Natural killer cell (primary cell): ENCODE measurements at regions of chrX and their contacts with region 1.

Region 1: GRCh38 chrX:149504915-149505651 is at the start of gene IDS:
- DNase-seq: peak; percentile 82 to 93
- ATAC-seq: peak; percentile 71 to 89 (median 80)
- H3K4me3 ChIP-seq: peak within 1 kb of the TSS; percentile 79
- H3K4me3 Mint-ChIP-seq: peak within 1 kb of the TSS; percentile 85
- H3K27ac ChIP-seq: peak within 1 kb of the TSS; percentile 98
- H3K27ac Mint-ChIP-seq: peak within 1 kb of the TSS; percentile 92 to 99
- H3K4me1 ChIP-seq: peaks cover 45% of the 10 kb centered on the region
- H3K4me1 Mint-ChIP-seq: peaks cover 37 to 44% of the 10 kb centered on the region in 2 donors
- H3K27me3 ChIP-seq: no peaks in the 10 kb centered on the region
- H3K27me3 Mint-ChIP-seq: peaks cover 0 to 10% of the 10 kb centered on the region in 2 donors
- CTCF ChIP-seq: no peak
- total RNA-seq, gene IDS: 286 to 344 (median 317) TPM

Region 2: DNA sequence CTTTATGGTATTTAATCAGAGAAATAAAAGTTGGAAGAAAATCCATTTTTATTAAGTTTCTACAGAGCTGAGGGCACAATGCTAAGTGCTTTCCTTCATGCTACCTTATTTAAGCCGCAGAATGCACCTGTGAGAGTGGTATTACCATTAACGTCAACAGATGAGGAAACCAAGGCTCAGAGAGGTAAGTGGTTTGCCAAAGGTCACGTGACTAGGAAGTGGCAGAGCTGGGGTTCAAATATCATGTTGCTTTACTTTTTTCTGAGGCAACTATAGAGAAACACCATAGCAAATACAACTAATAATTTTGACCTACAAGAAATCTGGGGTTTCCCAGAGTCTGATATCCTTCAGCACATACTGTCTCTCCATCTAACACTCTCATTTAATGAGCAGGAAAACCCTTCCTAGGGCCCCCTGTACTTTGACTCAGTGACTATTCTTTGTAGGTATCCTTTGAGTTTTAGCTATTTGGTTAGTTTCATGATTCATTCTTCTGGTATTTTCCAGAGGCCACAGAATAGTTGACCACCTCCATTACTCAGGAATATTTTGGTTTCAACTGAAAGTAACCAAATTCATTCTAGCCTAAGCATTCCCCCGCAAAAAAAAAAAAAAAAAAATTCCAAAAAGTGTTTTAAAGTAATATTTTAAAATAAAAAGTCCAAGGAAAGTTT is 140.2 kb before region 1 on chrX:
- intact Hi-C with region 1: no loop called
- DNase-seq: no peak
- ATAC-seq: no peak
- H3K4me3 ChIP-seq: no peak overlapping the region
- H3K4me3 Mint-ChIP-seq: no peak overlapping the region
- H3K27ac ChIP-seq: no peak overlapping the region
- H3K27ac Mint-ChIP-seq: no peak overlapping the region
- H3K4me1 ChIP-seq: no peaks in the 10 kb centered on the region
- H3K4me1 Mint-ChIP-seq: no peaks in the 10 kb centered on the region
- H3K27me3 ChIP-seq: no peaks in the 10 kb centered on the region
- H3K27me3 Mint-ChIP-seq: no peaks in the 10 kb centered on the region
- CTCF ChIP-seq: no peak

Region 3: GRCh38 chrX:149539283-149540130 is 34.4 kb after region 1 on chrX:
- intact Hi-C with region 1: loop called (anchors 1 kb)
- DNase-seq: peak; percentile 71 to 94
- ATAC-seq: peak; percentile 56 to 72 (median 59)
- H3K4me3 ChIP-seq: peak overlapping the region; percentile 64
- H3K4me3 Mint-ChIP-seq: peak overlapping the region; percentile 97
- H3K27ac ChIP-seq: peak overlapping the region; percentile 76
- H3K27ac Mint-ChIP-seq: peak overlapping the region; percentile 95 to 96
- H3K4me1 ChIP-seq: peaks cover 14% of the 10 kb centered on the region
- H3K4me1 Mint-ChIP-seq: peaks cover 6 to 33% of the 10 kb centered on the region in 2 donors
- H3K27me3 ChIP-seq: no peaks in the 10 kb centered on the region
- H3K27me3 Mint-ChIP-seq: no peaks in the 10 kb centered on the region
- CTCF ChIP-seq: no peak

Region 4: DNA sequence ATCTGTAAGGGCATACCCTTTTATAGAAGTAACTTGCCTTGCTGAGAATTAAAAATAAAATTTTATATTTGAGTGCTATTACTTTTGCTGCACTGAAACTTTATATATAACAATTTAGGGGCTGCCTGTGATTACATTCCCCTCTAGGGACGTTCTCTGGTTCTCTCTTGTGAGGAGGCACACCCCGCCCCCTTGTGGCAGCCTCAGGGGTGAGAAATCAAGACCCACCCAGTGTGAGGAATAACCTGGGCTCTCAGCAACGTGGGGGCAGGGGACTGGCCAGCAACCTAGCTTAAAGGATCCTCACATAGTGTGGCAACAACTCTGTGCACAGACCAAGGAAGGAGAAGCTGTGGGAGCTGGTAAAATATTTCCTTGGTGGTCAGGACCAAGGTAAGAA is 320.3 kb after region 1 on chrX:
- intact Hi-C with region 1: loop called (anchors 10 kb)
- DNase-seq: peak; percentile 40 to 63
- ATAC-seq: no peak
- H3K4me3 ChIP-seq: no peak overlapping the region
- H3K4me3 Mint-ChIP-seq: no peak overlapping the region
- H3K27ac ChIP-seq: no peak overlapping the region
- H3K27ac Mint-ChIP-seq: no peak overlapping the region
- H3K4me1 ChIP-seq: peaks cover 25% of the 10 kb centered on the region
- H3K4me1 Mint-ChIP-seq: peaks cover 43% of the 10 kb centered on the region in 2 donors
- H3K27me3 ChIP-seq: no peaks in the 10 kb centered on the region
- H3K27me3 Mint-ChIP-seq: peaks cover 3 to 20% of the 10 kb centered on the region in 2 donors
- CTCF ChIP-seq: peak; percentile 39

Region 5: GRCh38 chrX:150693775-150694574 is 1188.9 kb after region 1 on chrX:
- intact Hi-C with region 1: loop called (anchors 10 kb)
- DNase-seq: peak; percentile 48 to 76
- ATAC-seq: peak; percentile 44 to 75 (median 66)
- H3K4me3 ChIP-seq: peak overlapping the region; percentile 48
- H3K4me3 Mint-ChIP-seq: peak overlapping the region; percentile 94
- H3K27ac ChIP-seq: peak overlapping the region; percentile 89
- H3K27ac Mint-ChIP-seq: peak overlapping the region; percentile 81 to 91
- H3K4me1 ChIP-seq: peaks cover 64% of the 10 kb centered on the region
- H3K4me1 Mint-ChIP-seq: peaks cover 42 to 46% of the 10 kb centered on the region in 2 donors
- H3K27me3 ChIP-seq: no peaks in the 10 kb centered on the region
- H3K27me3 Mint-ChIP-seq: no peaks in the 10 kb centered on the region
- CTCF ChIP-seq: no peak